ENCODE measurements at regions of chr15 and their contacts with region 1.

Region 1: DNA sequence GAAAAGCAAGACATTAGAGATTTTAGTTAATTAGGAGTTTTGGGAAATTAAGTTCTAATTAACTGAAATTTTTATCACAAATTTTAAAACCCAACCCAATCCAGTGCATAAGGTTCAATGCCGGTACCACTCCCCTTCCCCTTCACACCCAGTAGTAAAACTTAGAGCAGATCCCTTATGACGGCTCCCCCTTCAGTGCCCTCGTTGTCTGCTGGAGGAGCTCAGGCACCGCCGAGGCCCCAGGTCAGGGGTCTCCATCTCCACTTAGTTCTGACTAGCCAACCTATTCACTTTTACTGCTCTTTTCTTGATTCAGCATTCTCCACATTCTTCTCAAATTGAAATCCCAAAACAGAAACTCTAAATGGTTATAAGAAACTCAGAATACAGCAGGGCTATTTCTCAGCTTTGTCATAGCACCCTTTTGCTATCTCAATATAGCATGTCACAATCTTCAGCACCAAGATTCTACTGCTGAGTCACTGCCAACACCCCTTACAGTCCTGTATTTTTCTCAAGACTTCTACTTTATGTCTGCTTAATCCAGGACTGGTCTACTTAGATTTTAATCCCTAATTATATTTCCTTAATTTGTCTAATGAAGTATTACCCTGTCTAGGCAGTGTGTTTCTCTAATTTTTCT is 39.8 kb downstream of the TUBGCP4 start:
- DNase-seq: no peak
- CTCF ChIP-seq: no peak

Region 2: GRCh38 chr15:43423793-43424192 is 13.1 kb after region 1 on chr15:
- CTCF ChIA-PET with region 1: interaction called, 11 read pairs
- POLR2A ChIA-PET with region 1: interaction called, 14 read pairs
- DNase-seq: no peak
- CTCF ChIP-seq: no peak

Region 3: GRCh38 chr15:43433165-43433564 is 22.5 kb after region 1 on chr15:
- CTCF ChIA-PET with region 1: interaction called, 11 read pairs
- POLR2A ChIA-PET with region 1: interaction called, 4 read pairs
- DNase-seq: no peak
- CTCF ChIP-seq: no peak

Region 4: GRCh38 chr15:43514241-43515057 is 103.8 kb after region 1 on chr15:
- CTCF ChIA-PET with region 1: no interaction called
- POLR2A ChIA-PET with region 1: no interaction called
- DNase-seq: no peak
- CTCF ChIP-seq: peak; percentile 52

Measured in GM10248 (cell line).